Aorta (tissue), 5 donors: ENCODE measurements at regions of chr11 and their contacts with region 1.

Region 1: GRCh38 chr11:121741761-121742361 is 289.1 kb upstream of the SORL1-AS1 start:
- DNase-seq: peak; percentile 91 to 92
- ATAC-seq: peak; percentile 93
- H3K4me3 ChIP-seq: no peak overlapping the region
- H3K27ac ChIP-seq: peak overlapping the region in 1 of 2 donors; percentile 81
- H3K4me1 ChIP-seq: peaks cover 2 to 8% of the 10 kb centered on the region in 2 donors
- H3K27me3 ChIP-seq: no peaks in the 10 kb centered on the region

Region 2: GRCh38 chr11:121253951-121254350 is 487.9 kb before region 1 on chr11:
- intact Hi-C with region 1: no loop called
- DNase-seq: no peak
- ATAC-seq: no peak
- H3K4me3 ChIP-seq: no peak overlapping the region
- H3K27ac ChIP-seq: no peak overlapping the region
- H3K4me1 ChIP-seq: no peaks in the 10 kb centered on the region
- H3K27me3 ChIP-seq: peaks cover 0 to 3% of the 10 kb centered on the region in 2 donors

Region 3: GRCh38 chr11:121655537-121656327 is 86.1 kb before region 1 on chr11:
- intact Hi-C with region 1: loop called in 1 of 2 experiments (anchors 5 kb)
- DNase-seq: peak; percentile 93 to 96
- ATAC-seq: peak; percentile 98
- H3K4me3 ChIP-seq: peak overlapping the region; percentile 19 to 57
- H3K27ac ChIP-seq: peak overlapping the region; percentile 74 to 99
- H3K4me1 ChIP-seq: no peaks in the 10 kb centered on the region
- H3K27me3 ChIP-seq: no peaks in the 10 kb centered on the region

Region 4: GRCh38 chr11:121671283-121672168 is 70.3 kb before region 1 on chr11:
- intact Hi-C with region 1: loop called in 1 of 2 experiments (anchors 5 kb)
- DNase-seq: no peak
- ATAC-seq: peak; percentile 41
- H3K4me3 ChIP-seq: peak overlapping the region in 1 of 2 donors; percentile 21
- H3K27ac ChIP-seq: peak overlapping the region; percentile 70 to 80
- H3K4me1 ChIP-seq: peaks cover 0 to 11% of the 10 kb centered on the region in 2 donors
- H3K27me3 ChIP-seq: no peaks in the 10 kb centered on the region

Region 5: DNA sequence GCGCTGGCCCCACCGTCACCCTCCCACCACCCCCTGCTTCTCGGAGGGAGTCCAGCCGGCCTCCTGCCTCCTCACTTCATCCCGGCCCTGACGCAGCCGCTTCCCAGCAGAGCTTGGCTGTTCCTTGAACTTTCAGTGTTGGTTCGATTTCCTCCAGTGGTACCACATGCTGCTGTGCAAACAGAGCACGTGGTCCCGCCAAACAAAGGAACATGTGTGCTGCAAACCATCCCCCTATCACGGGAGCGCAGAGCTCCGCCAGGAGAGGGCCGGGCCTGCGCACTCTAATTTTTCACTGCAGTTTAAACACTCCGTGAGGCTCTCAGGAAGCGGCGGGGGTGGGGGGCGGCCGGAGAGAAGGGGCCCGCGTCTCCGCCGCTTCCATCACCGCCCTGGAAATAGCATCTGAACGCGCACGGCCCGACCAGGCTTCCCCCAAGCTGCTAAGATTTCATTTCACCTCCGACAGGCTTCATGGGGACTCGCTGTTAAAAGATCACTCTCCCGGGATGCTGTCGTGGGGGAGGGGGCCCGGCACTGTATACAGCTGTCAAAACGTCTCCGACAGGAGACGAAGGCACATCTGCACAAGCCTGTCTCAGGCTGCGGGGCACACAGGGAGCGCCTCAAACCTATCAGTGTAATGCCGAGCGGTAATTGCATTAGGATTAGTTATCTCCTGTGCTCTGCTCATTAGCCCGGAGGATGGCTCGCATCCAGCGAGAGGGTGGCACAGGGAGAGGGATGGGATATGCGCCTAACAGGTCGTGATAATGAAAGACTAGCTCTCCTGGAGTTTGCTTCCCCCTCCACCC is 19.2 kb before region 1 on chr11:
- intact Hi-C with region 1: loop called in 1 of 2 experiments (anchors 1 kb)
- DNase-seq: peak; percentile 89 to 91
- ATAC-seq: peak; percentile 94
- H3K4me3 ChIP-seq: peak overlapping the region; percentile 34 to 72
- H3K27ac ChIP-seq: peak overlapping the region; percentile 60 to 80
- H3K4me1 ChIP-seq: no peaks in the 10 kb centered on the region
- H3K27me3 ChIP-seq: no peaks in the 10 kb centered on the region

Region 6: DNA sequence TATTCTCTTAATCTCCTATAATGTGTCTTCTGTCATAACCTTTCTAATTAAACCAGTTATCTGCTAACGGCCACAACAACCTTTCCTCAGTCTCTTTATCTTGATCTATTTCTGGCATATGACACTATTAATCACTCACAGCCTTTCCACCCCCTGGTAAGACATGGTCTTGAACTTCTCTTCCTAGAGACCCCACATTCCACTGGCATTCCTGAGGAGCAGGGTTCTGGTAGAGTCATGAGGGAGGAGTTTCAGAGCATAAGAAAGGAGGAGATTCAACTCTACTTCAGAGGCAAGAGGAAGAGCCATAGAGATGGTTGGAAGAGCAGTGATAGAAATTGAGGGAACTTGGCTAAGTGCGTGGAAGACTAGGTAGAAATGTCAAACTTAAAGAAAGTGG is 48.6 kb after region 1 on chr11:
- intact Hi-C with region 1: no loop called
- DNase-seq: no peak
- ATAC-seq: no peak
- H3K4me3 ChIP-seq: no peak overlapping the region
- H3K27ac ChIP-seq: no peak overlapping the region
- H3K4me1 ChIP-seq: peaks cover 2 to 3% of the 10 kb centered on the region in 2 donors
- H3K27me3 ChIP-seq: no peaks in the 10 kb centered on the region

Region 7: GRCh38 chr11:122108192-122108799 is 366.4 kb after region 1 on chr11:
- intact Hi-C with region 1: loop called in 1 of 2 experiments (anchors 10 kb)
- DNase-seq: no peak
- ATAC-seq: no peak
- H3K4me3 ChIP-seq: no peak overlapping the region
- H3K27ac ChIP-seq: peak overlapping the region in 1 of 2 donors; percentile 44
- H3K4me1 ChIP-seq: peaks cover 5 to 17% of the 10 kb centered on the region in 2 donors
- H3K27me3 ChIP-seq: no peaks in the 10 kb centered on the region

Region 8: DNA sequence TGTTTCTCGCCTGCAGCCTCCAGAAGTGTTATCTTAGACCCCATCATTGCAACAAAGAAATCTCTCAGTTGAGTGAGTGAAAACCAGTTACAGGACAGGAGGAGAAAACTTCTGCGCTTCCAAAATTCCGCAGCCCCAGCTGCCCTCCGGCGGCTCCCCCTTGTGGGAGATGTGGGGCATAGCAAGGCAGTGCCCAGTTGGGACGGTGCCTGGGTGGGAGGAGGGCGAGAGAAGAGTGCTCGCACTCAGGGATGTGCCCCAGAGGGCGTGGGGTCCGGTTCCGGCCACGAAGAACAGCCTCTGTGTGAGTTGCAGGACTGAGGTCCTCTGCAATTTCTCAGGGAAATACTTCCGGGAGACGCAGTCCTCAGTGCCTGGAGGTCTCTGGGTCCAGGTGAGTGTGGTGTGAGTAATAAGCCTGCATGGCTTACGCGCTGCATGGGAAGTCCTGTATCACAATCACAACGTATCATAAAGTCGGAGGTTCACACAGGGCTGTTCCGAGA is 461.1 kb after region 1 on chr11:
- intact Hi-C with region 1: loop called in 1 of 2 experiments (anchors 10 kb)
- DNase-seq: peak; percentile 80 to 91
- ATAC-seq: peak; percentile 91
- H3K4me3 ChIP-seq: peak overlapping the region; percentile 38 to 73
- H3K27ac ChIP-seq: peak overlapping the region in 1 of 2 donors; percentile 22
- H3K4me1 ChIP-seq: peaks cover 3 to 8% of the 10 kb centered on the region in 2 donors
- H3K27me3 ChIP-seq: no peaks in the 10 kb centered on the region